ENCODE measurements at regions of chr6 and their contacts with region 1.

Region 1: DNA sequence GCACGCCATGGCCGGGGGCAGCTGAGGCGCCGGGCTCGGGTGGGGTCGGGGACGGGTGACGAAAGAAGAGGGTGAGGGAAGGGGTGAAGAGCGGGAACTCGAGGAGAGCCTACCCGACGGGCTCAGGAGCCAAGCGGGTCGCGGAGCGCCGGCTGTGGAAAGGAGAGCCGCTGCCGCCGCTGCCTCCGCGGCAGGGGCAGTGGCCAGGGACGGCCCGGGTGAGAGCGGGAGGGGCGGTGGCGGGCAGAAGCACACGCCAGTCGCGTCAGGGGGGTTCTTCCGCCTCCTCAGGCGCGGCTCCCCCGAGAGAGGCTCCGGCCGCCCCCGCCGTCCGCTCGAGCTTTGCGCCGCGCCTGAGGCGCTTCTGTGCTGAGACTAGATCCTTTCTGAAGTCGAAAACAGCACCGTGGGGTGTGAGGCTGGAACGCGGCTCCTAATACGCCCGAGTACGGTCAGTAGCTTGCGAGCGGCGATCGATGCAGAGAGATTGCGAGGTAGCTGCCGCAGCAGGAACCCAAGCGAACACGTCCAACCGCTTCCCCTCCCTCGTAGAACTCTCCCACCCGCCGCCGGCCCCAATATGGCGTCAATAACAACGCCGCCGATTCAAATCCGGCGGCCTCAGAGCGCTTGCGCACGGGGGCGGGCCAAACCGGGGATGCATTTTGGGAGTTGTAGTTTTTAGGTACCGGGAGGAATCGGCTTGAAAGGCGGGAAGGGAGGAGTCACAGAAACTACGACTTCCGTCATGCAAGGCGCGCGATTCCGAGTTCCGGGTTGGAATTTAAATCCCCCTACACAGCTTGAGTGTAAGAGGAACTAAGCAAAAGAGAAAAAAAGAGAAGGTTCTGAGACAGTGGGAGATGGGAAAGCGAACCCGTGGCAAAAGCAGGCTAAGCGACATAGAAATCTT is at the start of gene AKIRIN2:
- DNase-seq: peak; percentile 99
- H3K4me3 ChIP-seq: peak within 1 kb of the TSS; percentile 82 to 88 (median 84)
- H3K27ac ChIP-seq: peak within 1 kb of the TSS; percentile 96 to 98 (median 96)
- H3K4me1 ChIP-seq: peaks cover 0 to 30% (median 22%) of the 10 kb centered on the region in 4 donors
- H3K27me3 ChIP-seq: no peaks in the 10 kb centered on the region
- CTCF ChIP-seq: no peak
- EP300 ChIP-seq: no peak
- POLR2A ChIP-seq: peak; percentile 94 to 95
- total RNA-seq, gene AKIRIN2: 16.6 to 20.8 (median 19.1) TPM

Region 2: DNA sequence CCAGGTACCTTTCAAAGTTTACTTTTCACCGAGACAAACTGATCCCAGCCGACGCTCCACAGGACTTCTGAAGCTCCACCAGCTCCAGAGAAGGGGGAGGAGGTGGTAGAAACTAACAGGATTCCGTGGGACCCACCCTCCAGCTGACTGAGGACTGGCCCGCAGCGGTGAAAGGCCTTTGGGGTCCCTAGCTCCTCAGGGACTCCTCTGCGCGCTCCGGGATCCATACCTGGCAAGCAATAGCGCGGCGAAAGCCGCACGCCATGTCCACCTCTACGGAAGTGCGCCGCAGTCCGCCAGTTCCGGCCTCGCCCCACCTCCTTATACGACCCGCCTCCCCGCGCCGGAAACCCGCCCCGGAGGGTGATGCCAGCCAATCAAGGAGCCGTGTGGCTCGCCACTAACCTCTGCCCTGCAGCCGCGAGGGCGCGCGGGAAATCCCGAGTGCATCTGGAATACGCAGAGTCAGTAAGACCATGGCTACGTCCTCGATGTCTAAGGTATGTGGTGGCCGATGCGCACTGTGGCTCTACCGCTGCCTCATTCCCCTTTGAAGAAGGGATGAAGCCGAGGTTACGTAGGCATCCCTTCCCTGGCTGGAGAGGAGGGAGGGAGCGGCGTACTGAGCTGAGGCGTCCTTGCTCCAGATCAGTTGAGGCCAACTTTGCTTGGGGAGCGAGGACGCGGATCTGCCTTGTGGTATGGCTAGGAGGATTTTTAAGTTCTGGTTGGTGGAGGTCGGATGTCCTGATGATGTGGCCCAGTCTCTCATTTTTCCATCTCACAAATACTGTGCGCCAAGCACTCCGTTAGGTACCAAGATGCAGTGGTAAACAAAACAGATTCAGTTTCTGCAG is 112.0 kb before region 1 on chr6 and contains the starts of genes ORC3 and RARS2:
- intact Hi-C with region 1: loop called (anchors 1 kb)
- DNase-seq: peak; percentile 98
- H3K4me3 ChIP-seq: peak within 1 kb of the TSS; percentile 81 to 89 (median 84)
- H3K27ac ChIP-seq: peak within 1 kb of the TSS; percentile 81 to 88 (median 87)
- H3K4me1 ChIP-seq: peaks cover 0 to 50% (median 28%) of the 10 kb centered on the region in 4 donors
- H3K27me3 ChIP-seq: no peaks in the 10 kb centered on the region
- CTCF ChIP-seq: no peak
- EP300 ChIP-seq: no peak
- POLR2A ChIP-seq: peak; percentile 90 to 92
- total RNA-seq, gene ORC3: 17.5 to 27.6 (median 23.7) TPM
- total RNA-seq, gene RARS2: 20.5 to 26.5 (median 20.6) TPM

Region 3: DNA sequence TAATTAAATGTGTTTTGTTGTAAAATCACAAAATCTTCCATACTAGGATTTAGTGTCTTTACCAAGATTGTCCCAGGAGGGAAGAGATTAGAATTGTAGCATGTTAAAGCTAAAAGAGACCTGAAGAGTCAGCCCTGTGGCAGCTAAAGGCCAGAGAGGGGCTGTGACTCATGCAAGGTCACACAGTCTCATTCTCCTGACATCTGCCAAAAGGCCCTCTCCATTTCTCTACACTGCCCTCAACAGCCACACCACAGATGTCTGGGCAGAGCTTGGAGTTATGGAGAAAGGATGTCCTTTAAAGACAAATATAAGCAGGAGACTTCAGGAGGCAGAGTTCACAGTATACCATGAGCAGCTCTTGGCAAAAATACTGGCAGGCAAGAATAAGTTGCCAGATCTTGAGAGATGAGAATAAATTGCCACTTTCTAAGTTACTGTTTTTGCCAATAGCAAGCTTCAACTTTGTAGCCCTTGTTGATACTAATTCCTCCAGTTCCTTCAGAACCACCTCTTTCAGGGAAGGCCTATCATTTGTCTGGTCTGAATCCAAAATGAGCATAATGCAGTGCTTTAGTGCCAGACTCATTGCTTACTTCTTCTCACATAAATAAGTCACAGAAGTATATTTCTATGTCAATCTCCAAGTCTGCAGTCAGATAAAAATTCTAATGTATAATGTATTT is 41.6 kb before region 1 on chr6:
- intact Hi-C with region 1: loop called (anchors 5 kb)
- DNase-seq: no peak
- H3K4me3 ChIP-seq: no peak overlapping the region
- H3K27ac ChIP-seq: peak overlapping the region in 2 of 4 donors; percentile 23 to 59
- H3K4me1 ChIP-seq: peaks cover 0 to 45% (median 34%) of the 10 kb centered on the region in 4 donors
- H3K27me3 ChIP-seq: no peaks in the 10 kb centered on the region
- CTCF ChIP-seq: no peak
- EP300 ChIP-seq: no peak
- POLR2A ChIP-seq: no peak

Region 4: DNA sequence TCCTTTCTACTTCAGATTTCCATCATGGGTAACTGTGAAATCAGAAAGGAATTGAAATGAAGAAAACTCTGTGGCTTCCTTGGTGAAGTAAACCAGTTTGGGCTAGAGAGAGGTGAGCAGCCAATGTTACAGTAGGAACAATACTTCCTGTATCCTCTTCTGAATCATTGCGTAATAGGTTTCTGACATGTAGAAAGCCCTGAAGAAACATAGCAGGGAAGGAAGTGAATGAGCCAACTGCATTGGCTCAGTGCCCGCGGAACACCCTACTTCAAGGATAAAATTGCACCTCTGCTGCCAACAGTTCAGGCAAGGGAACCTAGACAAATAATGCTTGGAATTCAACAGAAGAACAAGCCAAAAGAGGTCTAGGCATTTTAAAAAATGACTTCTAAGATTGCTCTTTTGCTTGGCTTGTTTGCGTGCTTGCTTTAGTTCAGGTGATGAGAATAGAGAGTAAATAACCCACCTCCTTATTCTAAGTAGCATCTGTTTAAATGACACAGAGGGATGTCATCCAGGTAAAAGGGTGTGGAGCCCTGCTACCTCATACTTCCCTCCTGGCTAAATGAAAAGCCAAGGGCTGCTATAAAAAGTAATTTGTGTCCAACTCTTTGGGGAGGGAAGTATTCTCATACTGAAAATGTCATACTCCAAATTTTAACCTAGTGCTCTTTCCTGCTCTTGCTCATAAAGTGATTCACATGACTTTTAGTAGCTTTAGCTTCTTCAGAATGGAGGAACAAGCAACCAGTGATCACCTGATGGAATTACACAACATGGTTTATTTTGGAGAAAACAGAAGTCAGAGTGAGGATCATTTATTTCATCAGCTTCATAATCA is 30.1 kb after region 1 on chr6:
- intact Hi-C with region 1: loop called (anchors 1 kb)
- DNase-seq: peak; percentile 96
- H3K4me3 ChIP-seq: no peak overlapping the region
- H3K27ac ChIP-seq: peak overlapping the region; percentile 32 to 79 (median 68)
- H3K4me1 ChIP-seq: peaks cover 0 to 10% (median 9%) of the 10 kb centered on the region in 4 donors
- H3K27me3 ChIP-seq: no peaks in the 10 kb centered on the region
- CTCF ChIP-seq: no peak
- EP300 ChIP-seq: peak in 2 of 4 donors; percentile 41 to 47
- POLR2A ChIP-seq: no peak

Region 5: GRCh38 chr6:87772597-87773530 is 70.9 kb after region 1 on chr6:
- intact Hi-C with region 1: no loop called
- DNase-seq: no peak
- H3K4me3 ChIP-seq: no peak overlapping the region
- H3K27ac ChIP-seq: no peak overlapping the region
- H3K4me1 ChIP-seq: no peaks in the 10 kb centered on the region
- H3K27me3 ChIP-seq: no peaks in the 10 kb centered on the region
- CTCF ChIP-seq: no peak
- EP300 ChIP-seq: no peak
- POLR2A ChIP-seq: no peak

Region 6: GRCh38 chr6:89638320-89639195 is 1936.6 kb after region 1 on chr6 and contains the start of gene LYRM2:
- intact Hi-C with region 1: loop called (anchors 5 kb)
- DNase-seq: peak; percentile 98
- H3K4me3 ChIP-seq: peak within 1 kb of the TSS; percentile 54 to 78 (median 64)
- H3K27ac ChIP-seq: peak within 1 kb of the TSS; percentile 88 to 93 (median 92)
- H3K4me1 ChIP-seq: peaks cover 0 to 18% (median 16%) of the 10 kb centered on the region in 4 donors
- H3K27me3 ChIP-seq: no peaks in the 10 kb centered on the region
- CTCF ChIP-seq: no peak
- EP300 ChIP-seq: peak in 1 of 4 donors; percentile 21
- POLR2A ChIP-seq: peak; percentile 86 to 88
- total RNA-seq, gene LYRM2: 15.0 to 33.3 (median 21.3) TPM

Measured in sigmoid colon (tissue), 7 donors.